Heart right ventricle (tissue), 16 donors: ENCODE measurements at regions of chr2 and their contacts with region 1.

Region 1: GRCh38 chr2:72603481-72603880 is 222.4 kb downstream of the EXOC6B start:
- DNase-seq: no peak
- ATAC-seq: peak in 2 of 8 donors; percentile 18 to 26
- H3K4me3 ChIP-seq: no peak overlapping the region
- H3K27ac ChIP-seq: no peak overlapping the region
- H3K4me1 ChIP-seq: peaks cover 0 to 14% (median 0%) of the 10 kb centered on the region in 9 donors
- H3K27me3 ChIP-seq: no peaks in the 10 kb centered on the region
- CTCF ChIP-seq: no peak

Region 2: GRCh38 chr2:72745679-72746368 is 142.3 kb after region 1 on chr2:
- intact Hi-C with region 1: loop called in 1 of 10 experiments (anchors 10 kb)
- DNase-seq: peak in 1 of 2 donors; percentile 13
- ATAC-seq: peak in 5 of 8 donors; percentile 33 to 65 (median 39)
- H3K4me3 ChIP-seq: no peak overlapping the region
- H3K27ac ChIP-seq: no peak overlapping the region
- H3K4me1 ChIP-seq: peaks cover 0 to 63% (median 33%) of the 10 kb centered on the region in 9 donors
- H3K27me3 ChIP-seq: no peaks in the 10 kb centered on the region
- CTCF ChIP-seq: peak; percentile 32 to 82 (median 73)